ENCODE measurements at regions of chr1 and their contacts with region 1.

Region 1: GRCh38 chr1:31715087-31715872 is 11.5 kb upstream of the COL16A1 start:
- DNase-seq: peak; percentile 77
- H3K4me3 ChIP-seq: peak overlapping the region; percentile 33
- H3K27me3 ChIP-seq: peaks cover 2% of the 10 kb centered on the region
- CTCF ChIP-seq: peak; percentile 95

Region 2: GRCh38 chr1:31663622-31664452 is 51.4 kb before region 1 on chr1:
- CTCF ChIA-PET with region 1: interaction called, 45 read pairs
- POLR2A ChIA-PET with region 1: interaction called, 3 read pairs
- DNase-seq: no peak
- H3K4me3 ChIP-seq: no peak overlapping the region
- H3K27me3 ChIP-seq: no peaks in the 10 kb centered on the region
- CTCF ChIP-seq: peak; percentile 85

Region 3: DNA sequence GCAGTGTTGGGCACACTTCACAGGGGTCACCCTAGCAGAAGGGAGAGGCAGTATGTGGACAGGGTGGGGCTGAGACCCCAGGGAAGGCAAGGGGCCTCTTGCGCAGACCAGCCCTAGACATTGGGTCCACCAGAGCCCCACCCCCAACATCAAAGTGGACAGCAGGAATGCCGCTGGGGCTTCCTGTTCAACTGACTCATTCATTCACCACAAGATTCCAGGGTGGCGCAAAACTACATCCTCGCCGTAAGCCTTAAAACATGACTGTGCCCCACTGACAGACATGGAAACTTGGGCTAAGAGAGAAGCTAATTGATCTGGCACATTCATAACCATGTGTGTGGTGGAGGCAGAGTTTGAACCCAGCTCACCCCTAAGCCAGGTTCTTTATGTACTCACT is 25.5 kb before region 1 on chr1:
- CTCF ChIA-PET with region 1: interaction called, 13 read pairs
- POLR2A ChIA-PET with region 1: no interaction called
- DNase-seq: peak; percentile 78
- H3K4me3 ChIP-seq: no peak overlapping the region
- H3K27me3 ChIP-seq: no peaks in the 10 kb centered on the region
- CTCF ChIP-seq: no peak

Region 4: GRCh38 chr1:31733389-31734219 is 18.3 kb after region 1 on chr1:
- CTCF ChIA-PET with region 1: interaction called, 25 read pairs
- POLR2A ChIA-PET with region 1: no interaction called
- DNase-seq: no peak
- H3K4me3 ChIP-seq: no peak overlapping the region
- H3K27me3 ChIP-seq: no peaks in the 10 kb centered on the region
- CTCF ChIP-seq: no peak

Region 5: GRCh38 chr1:31745096-31745945 is 30.0 kb after region 1 on chr1:
- CTCF ChIA-PET with region 1: interaction called, 57 read pairs
- POLR2A ChIA-PET with region 1: no interaction called
- DNase-seq: no peak
- H3K4me3 ChIP-seq: no peak overlapping the region
- H3K27me3 ChIP-seq: no peaks in the 10 kb centered on the region
- CTCF ChIP-seq: peak; percentile 90

Measured in BJ (cell line).